ENCODE measurements at regions of chr2 and their contacts with region 1.

Region 1: DNA sequence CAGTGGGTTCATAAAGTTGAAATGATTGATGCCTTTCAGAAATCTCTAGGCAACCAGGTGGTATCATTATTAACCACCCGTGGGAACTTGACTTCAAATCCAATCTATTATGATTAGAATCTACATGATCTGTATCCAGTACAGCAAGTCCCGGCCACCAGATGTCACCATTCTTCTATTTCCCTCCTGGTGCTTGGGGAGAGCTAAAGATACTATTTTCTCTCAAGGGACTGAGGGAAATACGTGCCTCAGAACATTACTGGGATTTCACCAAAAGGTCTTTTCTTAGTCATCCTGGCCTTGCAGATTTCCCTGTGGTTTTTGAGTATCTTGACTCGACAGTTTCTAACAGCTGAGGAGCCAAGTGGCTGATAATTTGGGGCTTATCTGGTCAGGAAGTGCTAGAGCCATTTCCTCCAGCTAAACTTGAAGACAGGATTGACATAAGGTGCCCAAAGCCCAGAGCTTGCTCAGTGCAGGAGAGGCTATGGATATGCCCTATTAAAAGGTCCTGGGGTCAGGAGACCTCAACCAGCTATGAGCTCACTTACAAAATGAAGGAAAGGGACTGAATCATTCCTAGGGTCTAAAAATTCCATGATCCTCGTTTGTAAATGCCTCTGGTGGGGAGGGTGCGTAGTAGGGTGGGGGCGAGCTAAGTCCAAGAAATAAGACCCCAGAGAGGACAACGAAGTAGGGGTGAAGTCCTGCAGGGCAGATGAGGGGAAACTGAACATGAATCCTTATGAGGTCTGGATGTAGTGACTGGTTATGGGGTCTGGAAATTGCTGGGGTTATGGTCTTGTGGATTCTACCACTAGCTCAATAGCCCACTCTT is 135.4 kb upstream of the MGAT5 start:
- DNase-seq: peak; percentile 73 to 98 (median 90)
- H3K4me3 ChIP-seq: peak overlapping the region in 19 of 59 donors; percentile 1 to 97 (median 88)
- H3K27ac ChIP-seq: peak overlapping the region in 56 of 59 donors; percentile 13 to 98 (median 93)
- H3K27me3 ChIP-seq: no peaks in the 10 kb centered on the region
- CTCF ChIP-seq: peak; percentile 76 to 99 (median 93)

Region 2: DNA sequence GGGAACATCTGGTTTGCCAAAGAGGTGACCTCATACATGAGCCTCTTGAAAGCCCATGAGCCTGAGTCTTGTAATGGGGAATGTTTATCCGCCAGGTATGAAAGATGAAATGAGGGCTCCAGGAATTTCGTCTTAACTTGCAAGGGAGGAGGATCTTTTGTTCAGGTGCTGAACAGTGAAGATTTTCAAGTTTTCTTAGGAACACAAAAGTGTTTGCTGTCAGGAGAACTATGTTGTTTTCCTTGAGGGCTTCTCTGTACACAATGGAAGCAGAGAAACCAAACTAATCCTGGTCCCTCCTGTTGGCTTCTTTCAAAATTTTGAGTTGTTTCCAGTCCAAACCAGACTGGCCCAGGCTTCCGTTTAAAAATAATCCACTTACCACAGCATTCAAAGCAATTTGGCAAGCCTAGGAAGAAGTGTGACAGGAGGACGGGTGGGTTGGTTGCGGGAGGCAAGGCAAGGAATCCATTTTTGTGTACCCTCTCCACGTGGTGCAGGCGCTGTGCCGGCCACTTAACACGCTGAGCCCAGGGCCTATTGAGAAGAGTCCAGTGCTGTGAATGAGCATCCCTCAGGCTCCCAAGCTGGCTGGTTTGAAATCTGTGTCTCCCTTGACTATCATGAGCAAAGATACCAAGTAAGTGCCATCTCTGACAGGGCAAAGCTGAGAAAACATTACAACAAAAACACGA is 711.3 kb before region 1 on chr2:
- intact Hi-C with region 1: no loop called
- DNase-seq: no peak
- H3K4me3 ChIP-seq: no peak overlapping the region
- H3K27ac ChIP-seq: no peak overlapping the region
- H3K27me3 ChIP-seq: peaks cover 0 to 5% (median 0%) of the 10 kb centered on the region in 45 donors
- CTCF ChIP-seq: no peak

Region 3: GRCh38 chr2:134137182-134137611 is 18.7 kb after region 1 on chr2:
- intact Hi-C with region 1: loop called in 1 of 2 experiments (anchors 1 kb)
- DNase-seq: no peak
- H3K4me3 ChIP-seq: peak overlapping the region in 16 of 59 donors; percentile 1 to 44 (median 14)
- H3K27ac ChIP-seq: peak overlapping the region in 52 of 59 donors; percentile 11 to 91 (median 58)
- H3K27me3 ChIP-seq: no peaks in the 10 kb centered on the region
- CTCF ChIP-seq: peak in 1 of 56 donors; percentile 15

Region 4: DNA sequence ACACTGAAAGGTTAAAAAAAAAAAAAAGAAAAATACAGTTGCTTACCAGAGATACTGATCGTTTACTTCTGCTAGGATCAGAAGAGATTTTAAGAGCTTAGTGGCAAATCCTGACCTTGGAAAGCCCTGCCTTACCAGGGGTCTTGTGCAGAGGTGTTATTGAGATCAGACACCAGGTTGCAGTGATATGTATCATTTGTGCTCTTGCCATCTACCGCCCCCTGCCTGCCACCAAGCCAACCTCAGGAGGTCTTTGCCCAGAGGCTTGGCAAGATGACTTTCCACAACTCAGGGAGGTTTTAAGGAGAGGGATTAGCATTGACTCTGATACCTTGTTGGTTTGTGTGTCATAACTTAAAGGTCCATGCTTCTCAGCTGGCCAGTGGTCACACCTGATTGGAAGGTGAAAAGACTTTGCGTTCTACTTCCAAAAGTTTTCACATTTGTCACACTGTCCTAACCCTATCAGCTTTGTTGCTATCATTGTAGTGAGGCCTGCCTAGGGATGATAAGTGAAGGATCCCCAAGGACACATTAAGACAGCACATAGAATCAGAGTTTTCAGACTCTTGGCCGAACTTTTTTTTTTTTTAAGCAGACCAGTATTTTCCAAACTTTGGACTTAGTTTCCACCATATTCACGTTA is 89.2 kb after region 1 on chr2:
- intact Hi-C with region 1: loop called in 1 of 2 experiments (anchors 5 kb)
- DNase-seq: peak in 2 of 10 donors; percentile 27 to 50
- H3K4me3 ChIP-seq: no peak overlapping the region
- H3K27ac ChIP-seq: peak overlapping the region in 1 of 59 donors; percentile 25
- H3K27me3 ChIP-seq: no peaks in the 10 kb centered on the region
- CTCF ChIP-seq: peak in 55 of 56 donors; percentile 12 to 69 (median 52)

Region 5: GRCh38 chr2:134375935-134376334 is 257.4 kb after region 1 on chr2:
- intact Hi-C with region 1: loop called in 1 of 2 experiments (anchors 10 kb)
- DNase-seq: peak; percentile 42 to 79 (median 66)
- H3K4me3 ChIP-seq: peak overlapping the region in 1 of 59 donors; percentile 2
- H3K27ac ChIP-seq: peak overlapping the region in 43 of 59 donors; percentile 4 to 87 (median 50)
- H3K27me3 ChIP-seq: no peaks in the 10 kb centered on the region
- CTCF ChIP-seq: peak in 55 of 56 donors; percentile 23 to 78 (median 51)

Region 6: DNA sequence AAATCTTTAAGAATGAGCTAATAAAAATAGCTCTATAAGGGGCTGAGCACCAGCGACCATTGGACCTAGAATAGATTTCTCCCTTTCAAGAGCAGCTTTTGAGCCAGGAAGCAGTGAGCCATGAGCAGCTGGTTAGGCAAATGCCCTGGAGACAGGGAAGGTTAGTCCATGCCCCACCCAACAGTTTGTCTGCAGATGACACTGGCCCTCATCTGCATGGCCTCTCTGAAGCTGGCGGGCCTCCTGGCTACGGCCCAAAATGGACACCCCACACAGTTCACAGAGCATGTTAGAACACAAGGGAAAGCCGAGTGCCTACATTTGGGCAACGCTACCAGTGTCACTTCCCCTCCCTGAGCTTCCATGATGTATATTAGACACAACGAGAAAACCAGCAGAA is 336.4 kb after region 1 on chr2:
- intact Hi-C with region 1: loop called (anchors 1 to 2 kb)
- DNase-seq: peak in 1 of 10 donors; percentile 9
- H3K4me3 ChIP-seq: no peak overlapping the region
- H3K27ac ChIP-seq: no peak overlapping the region
- H3K27me3 ChIP-seq: no peaks in the 10 kb centered on the region
- CTCF ChIP-seq: no peak